Kidney (tissue), 22 donors: ENCODE measurements at regions of chr4 and their contacts with region 1.

Region 1: DNA sequence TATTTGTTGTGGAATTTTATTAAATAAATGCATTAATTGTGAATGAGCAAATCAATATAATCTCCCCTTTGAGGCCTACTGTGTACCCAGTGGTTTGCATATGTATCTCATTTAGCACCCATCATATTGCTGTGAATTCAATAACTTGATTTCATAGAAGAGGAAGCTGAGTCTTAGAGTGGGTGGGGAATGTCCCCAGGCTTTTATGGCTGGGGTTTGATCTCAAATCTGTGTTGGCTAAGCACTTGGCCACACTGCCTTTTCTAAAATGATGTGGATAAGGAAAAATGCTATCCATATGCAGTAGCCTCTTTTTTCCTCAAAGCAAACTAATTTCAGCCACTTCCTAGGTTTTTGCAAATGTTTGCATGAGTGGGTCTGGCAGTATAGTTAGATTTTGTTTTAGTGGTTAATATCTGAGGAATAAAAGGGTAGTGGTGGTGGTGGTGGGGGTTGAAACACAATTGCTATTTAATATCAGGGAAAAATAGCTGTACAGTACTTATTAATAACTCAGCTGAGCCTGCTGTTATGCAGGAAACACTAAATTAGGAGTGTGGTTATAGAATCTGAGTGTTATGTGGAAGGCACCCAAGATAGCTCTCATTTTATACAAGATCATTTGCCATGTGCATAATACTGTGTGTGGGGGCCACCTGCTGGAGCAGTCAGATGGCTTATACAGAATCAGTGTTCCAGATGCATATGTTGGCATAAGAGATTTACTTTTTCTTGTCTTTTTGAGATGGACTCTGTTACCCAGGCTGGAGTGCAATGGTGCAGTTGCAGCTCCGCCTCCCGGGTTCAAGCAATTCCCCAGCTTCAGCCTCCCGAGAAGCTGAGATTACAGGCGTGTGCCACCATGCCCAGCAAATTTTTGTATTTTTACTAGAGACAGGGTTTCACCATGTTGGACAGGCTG is 108.0 kb downstream of the TMEM131L start:
- DNase-seq: peak in 4 of 5 donors; percentile 56 to 92 (median 66)
- H3K4me3 ChIP-seq: no peak overlapping the region
- H3K27ac ChIP-seq: no peak overlapping the region
- H3K4me1 ChIP-seq: no peaks in the 10 kb centered on the region
- H3K27me3 ChIP-seq: no peaks in the 10 kb centered on the region
- CTCF ChIP-seq: peak; percentile 67

Region 2: GRCh38 chr4:153142700-153143438 is 431.3 kb before region 1 on chr4:
- intact Hi-C with region 1: loop called (anchors 10 kb)
- DNase-seq: peak; percentile 82 to 95 (median 89)
- H3K4me3 ChIP-seq: peak overlapping the region in 2 of 3 donors; percentile 21 to 37
- H3K27ac ChIP-seq: peak overlapping the region in 1 of 2 donors; percentile 45
- H3K4me1 ChIP-seq: peaks cover 0 to 5% (median 2%) of the 10 kb centered on the region in 3 donors
- H3K27me3 ChIP-seq: no peaks in the 10 kb centered on the region
- CTCF ChIP-seq: peak; percentile 84

Region 3: DNA sequence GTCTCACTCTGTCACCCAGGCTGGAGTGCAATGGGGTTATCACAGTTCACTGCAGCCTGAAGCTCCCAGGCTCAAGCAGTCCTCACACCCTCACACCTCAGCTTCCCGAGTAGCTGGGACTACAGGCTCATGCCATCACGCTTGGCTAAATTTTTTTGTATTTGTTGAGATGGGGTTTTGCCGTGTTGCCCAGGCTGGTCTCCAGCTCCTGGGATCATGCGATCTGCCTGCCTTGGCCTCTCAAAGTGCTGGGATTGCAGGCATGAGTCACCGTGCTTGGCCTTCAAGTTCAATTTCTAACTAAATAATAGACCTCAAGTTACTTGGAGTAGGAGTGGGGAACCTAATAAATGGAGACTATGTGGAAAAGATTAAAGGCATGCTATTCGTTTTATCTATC is 180.7 kb before region 1 on chr4:
- intact Hi-C with region 1: no loop called
- DNase-seq: no peak
- H3K4me3 ChIP-seq: no peak overlapping the region
- H3K27ac ChIP-seq: no peak overlapping the region
- H3K4me1 ChIP-seq: no peaks in the 10 kb centered on the region
- H3K27me3 ChIP-seq: no peaks in the 10 kb centered on the region
- CTCF ChIP-seq: no peak

Region 4: GRCh38 chr4:153466081-153466948 is 107.8 kb before region 1 on chr4 and contains the start of gene TMEM131L:
- intact Hi-C with region 1: loop called (anchors 10 kb)
- DNase-seq: peak; percentile 77 to 92 (median 87)
- H3K4me3 ChIP-seq: peak within 1 kb of the TSS; percentile 76 to 83 (median 79)
- H3K27ac ChIP-seq: peak within 1 kb of the TSS; percentile 45 to 67
- H3K4me1 ChIP-seq: peaks cover 0 to 8% (median 8%) of the 10 kb centered on the region in 3 donors
- H3K27me3 ChIP-seq: no peaks in the 10 kb centered on the region
- CTCF ChIP-seq: no peak
- total RNA-seq, gene TMEM131L: 17.0 TPM